SK-N-SH (cell line): ENCODE measurements at regions of chr17 and their contacts with region 1.

Region 1: GRCh38 chr17:51764387-51764972 is 394.0 kb downstream of the CA10 start:
- DNase-seq: peak; percentile 76
- H3K4me3 ChIP-seq: no peak overlapping the region
- H3K27ac ChIP-seq: no peak overlapping the region
- H3K4me1 ChIP-seq: peaks cover 0 to 3% of the 10 kb centered on the region in 2 experiments; a peak in 1 of 4 replicates
- H3K27me3 ChIP-seq: no peaks in the 10 kb centered on the region
- CTCF ChIP-seq: peak; percentile 96
- EP300 ChIP-seq: no peak
- RAD21 ChIP-seq: peak; percentile 97

Region 2: DNA sequence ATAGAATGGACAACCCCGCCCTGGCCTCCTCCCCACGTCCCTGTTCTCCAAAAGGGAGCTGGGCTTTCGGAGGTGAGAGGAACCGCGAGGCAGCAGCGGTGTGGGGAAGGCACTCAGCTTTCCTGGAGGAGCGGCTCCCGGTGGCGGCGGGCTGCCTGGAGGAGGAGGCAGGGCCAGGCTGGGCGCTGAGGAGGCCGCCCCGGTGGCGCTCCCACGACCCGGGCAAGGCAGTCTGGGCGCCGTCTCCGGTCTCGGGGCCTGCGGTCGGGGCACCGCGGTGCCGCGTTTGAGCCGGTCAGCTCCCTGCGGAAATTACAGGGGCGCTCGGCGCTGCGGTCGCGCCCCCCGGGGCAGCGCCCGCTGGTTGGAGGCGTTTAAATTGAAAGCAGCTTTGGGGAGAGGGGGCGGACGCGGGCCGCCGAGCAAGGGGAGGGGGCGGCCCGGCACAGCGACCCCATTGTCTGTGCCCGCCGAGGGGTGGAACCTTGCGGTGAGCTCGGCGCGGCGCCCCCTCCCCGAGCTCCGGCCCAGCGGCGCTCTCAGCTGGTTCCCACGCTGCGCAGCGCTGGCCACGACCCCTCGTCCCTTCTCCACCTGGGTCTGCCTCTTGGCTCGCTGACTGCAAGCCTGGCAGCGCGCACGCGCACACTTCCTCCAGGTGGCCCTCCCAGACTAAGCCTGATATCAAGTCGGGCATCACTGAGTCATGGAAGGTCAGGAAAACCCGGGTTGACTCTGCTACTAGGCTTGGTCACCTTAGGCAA is 1854.2 kb before region 1 on chr17:
- CTCF ChIA-PET with region 1: no interaction called
- POLR2A ChIA-PET with region 1: no interaction called
- DNase-seq: peak; percentile 73
- H3K4me3 ChIP-seq: peak overlapping the region in 1 of 2 experiments; percentile 15; a peak in 1 of 4 replicates
- H3K27ac ChIP-seq: no peak overlapping the region
- H3K4me1 ChIP-seq: peaks cover 0 to 3% of the 10 kb centered on the region in 2 experiments; a peak in 1 of 4 replicates
- H3K27me3 ChIP-seq: peaks cover 93% of the 10 kb centered on the region
- CTCF ChIP-seq: no peak
- EP300 ChIP-seq: no peak
- RAD21 ChIP-seq: no peak

Region 3: DNA sequence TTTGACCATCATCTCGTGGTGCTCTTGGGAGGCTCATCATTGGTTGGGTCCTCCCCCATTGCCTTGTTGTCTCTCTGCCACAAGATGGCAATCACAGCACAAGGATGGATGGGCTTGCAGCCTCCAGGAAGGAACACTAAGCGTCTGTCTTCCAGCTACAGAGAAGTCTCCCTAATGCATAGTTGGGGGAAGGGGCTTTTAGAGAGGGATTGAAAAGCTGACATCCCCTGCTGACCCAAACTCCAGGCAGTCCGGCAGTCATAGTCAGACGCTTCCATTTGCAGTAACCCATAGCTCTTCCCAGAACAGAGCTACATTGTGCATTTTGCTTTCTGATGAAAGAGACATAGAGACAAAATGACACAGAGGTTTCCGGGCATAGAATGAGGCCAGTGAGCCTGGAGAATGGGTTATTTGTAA is 392.7 kb before region 1 on chr17:
- CTCF ChIA-PET with region 1: interaction called, 25 read pairs
- POLR2A ChIA-PET with region 1: no interaction called
- DNase-seq: peak; percentile 85
- H3K4me3 ChIP-seq: peak overlapping the region in 1 of 2 experiments; percentile 10; a peak in 1 of 4 replicates
- H3K27ac ChIP-seq: peak overlapping the region in 1 of 2 experiments; percentile 4; a peak in 1 of 4 replicates
- H3K4me1 ChIP-seq: peaks cover 0 to 16% of the 10 kb centered on the region in 2 experiments; a peak in 1 of 4 replicates
- H3K27me3 ChIP-seq: no peaks in the 10 kb centered on the region
- CTCF ChIP-seq: peak; percentile 57
- EP300 ChIP-seq: no peak
- RAD21 ChIP-seq: peak; percentile 100

Region 4: GRCh38 chr17:51778842-51779241 is 14.4 kb after region 1 on chr17:
- CTCF ChIA-PET with region 1: interaction called, 40 read pairs
- POLR2A ChIA-PET with region 1: no interaction called
- DNase-seq: no peak
- H3K4me3 ChIP-seq: no peak overlapping the region
- H3K27ac ChIP-seq: no peak overlapping the region
- H3K4me1 ChIP-seq: no peaks in the 10 kb centered on the region
- H3K27me3 ChIP-seq: no peaks in the 10 kb centered on the region
- CTCF ChIP-seq: no peak
- EP300 ChIP-seq: no peak
- RAD21 ChIP-seq: no peak

Region 5: DNA sequence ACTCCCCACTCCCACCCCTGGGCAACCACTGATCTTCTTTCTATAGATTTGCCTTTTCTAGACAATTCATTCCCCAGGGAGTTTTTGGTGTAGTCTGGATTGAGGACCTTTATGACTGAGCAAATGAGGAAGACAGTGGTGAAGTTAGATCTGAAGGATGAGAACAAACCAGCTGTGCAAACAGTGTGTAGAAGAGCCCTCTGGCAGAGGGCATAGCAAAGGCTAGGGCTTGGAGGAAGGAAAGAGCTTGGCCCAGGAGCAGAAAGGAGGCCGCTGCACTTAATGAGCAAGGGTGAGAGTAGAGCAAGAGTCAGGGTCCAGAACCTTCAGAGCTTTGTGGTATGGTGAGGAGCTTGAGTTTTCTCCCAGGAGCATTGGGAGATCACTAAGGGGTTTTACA is 41.3 kb after region 1 on chr17:
- CTCF ChIA-PET with region 1: interaction called, 14 read pairs
- POLR2A ChIA-PET with region 1: no interaction called
- DNase-seq: no peak
- H3K4me3 ChIP-seq: no peak overlapping the region
- H3K27ac ChIP-seq: no peak overlapping the region
- H3K4me1 ChIP-seq: peaks cover 0 to 5% of the 10 kb centered on the region in 2 experiments; a peak in 2 of 4 replicates
- H3K27me3 ChIP-seq: no peaks in the 10 kb centered on the region
- CTCF ChIP-seq: no peak
- EP300 ChIP-seq: no peak
- RAD21 ChIP-seq: no peak

Region 6: DNA sequence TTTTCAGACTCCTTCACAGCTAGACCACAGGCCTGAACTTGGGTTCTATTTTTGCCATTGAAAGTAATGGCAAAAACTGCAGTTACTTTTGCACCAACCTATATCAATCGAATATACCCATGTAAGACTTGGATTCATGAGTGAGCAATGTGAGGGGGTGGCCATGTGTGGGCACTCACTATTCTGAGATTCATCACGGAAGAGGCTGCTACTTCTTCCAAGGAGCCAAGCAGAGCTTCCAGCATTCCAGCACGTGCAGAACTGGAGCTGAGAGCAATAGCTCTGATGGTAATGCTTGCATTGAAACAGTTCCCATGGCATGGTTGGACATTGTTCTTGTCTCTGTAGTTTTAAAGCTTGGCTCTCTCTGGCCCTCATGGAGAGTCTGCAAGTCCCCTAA is 66.4 kb after region 1 on chr17:
- CTCF ChIA-PET with region 1: interaction called, 10 read pairs
- POLR2A ChIA-PET with region 1: no interaction called
- DNase-seq: no peak
- H3K4me3 ChIP-seq: no peak overlapping the region
- H3K27ac ChIP-seq: no peak overlapping the region
- H3K4me1 ChIP-seq: no peaks in the 10 kb centered on the region
- H3K27me3 ChIP-seq: no peaks in the 10 kb centered on the region
- CTCF ChIP-seq: no peak
- EP300 ChIP-seq: no peak
- RAD21 ChIP-seq: no peak

Region 7: DNA sequence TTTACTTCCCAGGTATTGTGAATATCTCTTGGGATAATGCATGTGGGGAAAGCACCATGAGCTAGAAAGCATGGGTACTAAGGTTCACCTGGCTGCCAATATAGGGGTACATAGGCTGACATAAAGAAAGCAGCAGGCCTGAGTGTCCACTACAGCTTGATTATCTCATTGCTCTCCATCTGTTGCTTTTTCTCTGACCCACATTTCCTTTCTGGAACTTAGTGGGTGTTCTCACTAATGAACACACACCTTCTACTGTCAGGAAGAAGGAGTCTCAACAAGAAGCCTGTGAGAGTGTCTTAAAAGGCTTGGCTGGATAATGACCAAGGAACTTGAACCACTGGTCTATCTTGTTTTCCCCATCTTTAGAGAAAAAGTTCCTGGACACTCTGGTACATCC is 331.6 kb after region 1 on chr17:
- CTCF ChIA-PET with region 1: interaction called, 42 read pairs
- POLR2A ChIA-PET with region 1: no interaction called
- DNase-seq: no peak
- H3K4me3 ChIP-seq: no peak overlapping the region
- H3K27ac ChIP-seq: no peak overlapping the region
- H3K4me1 ChIP-seq: no peaks in the 10 kb centered on the region
- H3K27me3 ChIP-seq: no peaks in the 10 kb centered on the region
- CTCF ChIP-seq: no peak
- EP300 ChIP-seq: no peak
- RAD21 ChIP-seq: no peak

Region 8: GRCh38 chr17:52158450-52159042 is 394.1 kb after region 1 on chr17 and contains the start of gene CA10:
- CTCF ChIA-PET with region 1: interaction called, 10 read pairs
- POLR2A ChIA-PET with region 1: no interaction called
- DNase-seq: peak; percentile 80
- H3K4me3 ChIP-seq: peak within 1 kb of the TSS in 1 of 2 experiments; percentile 42; a peak in 2 of 4 replicates
- H3K27ac ChIP-seq: no peak within 1 kb of the TSS
- H3K4me1 ChIP-seq: peaks cover 0 to 17% of the 10 kb centered on the region in 2 experiments; a peak in 1 of 4 replicates
- H3K27me3 ChIP-seq: peaks cover 28% of the 10 kb centered on the region
- CTCF ChIP-seq: no peak
- EP300 ChIP-seq: no peak
- RAD21 ChIP-seq: peak; percentile 62
- polyA plus RNA-seq, gene CA10: not detected in 2 replicates